OCI-LY7 (cell line): ENCODE measurements at regions of chr6 and their contacts with region 1.

Region 1: GRCh38 chr6:159989492-159990480 is 20.9 kb downstream of the IGF2R start:
- DNase-seq: no peak
- H3K4me3 ChIP-seq: no peak overlapping the region
- H3K27ac ChIP-seq: no peak overlapping the region
- H3K4me1 ChIP-seq: no peaks in the 10 kb centered on the region
- CTCF ChIP-seq: no peak

Region 2: DNA sequence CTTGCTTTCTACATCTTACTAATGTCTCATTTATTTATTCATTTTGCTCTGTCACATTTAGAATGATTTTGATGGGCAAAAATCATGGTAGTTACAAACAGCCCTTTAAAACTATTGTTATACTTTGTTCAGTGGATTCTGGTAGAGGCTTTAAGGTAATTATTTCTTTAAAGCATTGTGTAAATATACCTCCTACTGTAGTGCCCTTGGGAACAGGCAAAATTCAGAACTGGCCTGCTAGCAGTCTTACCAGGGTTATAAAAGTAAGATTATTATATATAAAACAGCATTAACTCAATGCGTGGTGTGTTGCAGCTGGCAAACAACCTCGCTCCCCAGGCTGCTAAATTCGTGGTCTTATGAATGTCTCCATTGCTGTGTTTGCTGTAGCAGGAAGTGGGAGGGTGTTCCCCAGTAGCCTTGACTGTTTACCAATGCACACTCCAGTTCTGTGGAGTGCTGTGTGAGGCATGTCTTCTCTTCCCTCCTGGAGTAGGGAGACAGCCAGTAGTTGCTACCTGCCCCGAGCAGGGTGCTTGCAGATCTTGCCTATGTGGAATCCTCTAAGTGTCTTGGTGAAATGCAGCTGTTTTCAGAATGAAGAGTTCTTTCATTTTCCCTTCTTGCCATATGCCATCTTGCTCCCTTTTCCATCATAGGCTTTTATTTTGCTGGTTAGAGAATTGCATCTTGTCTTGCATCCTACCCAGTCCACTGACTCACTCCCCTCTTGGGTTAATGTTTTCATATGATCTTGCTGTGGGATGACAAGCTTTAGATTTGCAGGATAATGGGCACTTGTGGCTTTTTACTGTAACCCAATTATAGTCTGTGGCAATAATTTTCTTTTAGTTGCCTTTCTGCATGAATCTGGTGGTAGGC is 24.4 kb after region 1 on chr6:
- CTCF ChIA-PET with region 1: no interaction called
- POLR2A ChIA-PET with region 1: no interaction called
- intact Hi-C with region 1: loop called (anchors 1 kb)
- DNase-seq: no peak
- H3K4me3 ChIP-seq: no peak overlapping the region
- H3K27ac ChIP-seq: no peak overlapping the region
- H3K4me1 ChIP-seq: no peaks in the 10 kb centered on the region
- CTCF ChIP-seq: no peak

Region 3: GRCh38 chr6:160036790-160037206 is 47.0 kb after region 1 on chr6:
- CTCF ChIA-PET with region 1: no interaction called
- POLR2A ChIA-PET with region 1: no interaction called
- intact Hi-C with region 1: loop called (anchors 2 kb)
- DNase-seq: no peak
- H3K4me3 ChIP-seq: no peak overlapping the region
- H3K27ac ChIP-seq: no peak overlapping the region
- H3K4me1 ChIP-seq: no peaks in the 10 kb centered on the region
- CTCF ChIP-seq: no peak